Endothelial cell of umbilical vein (primary cell): ENCODE measurements at regions of chr19 and their contacts with region 1.

Region 1: DNA sequence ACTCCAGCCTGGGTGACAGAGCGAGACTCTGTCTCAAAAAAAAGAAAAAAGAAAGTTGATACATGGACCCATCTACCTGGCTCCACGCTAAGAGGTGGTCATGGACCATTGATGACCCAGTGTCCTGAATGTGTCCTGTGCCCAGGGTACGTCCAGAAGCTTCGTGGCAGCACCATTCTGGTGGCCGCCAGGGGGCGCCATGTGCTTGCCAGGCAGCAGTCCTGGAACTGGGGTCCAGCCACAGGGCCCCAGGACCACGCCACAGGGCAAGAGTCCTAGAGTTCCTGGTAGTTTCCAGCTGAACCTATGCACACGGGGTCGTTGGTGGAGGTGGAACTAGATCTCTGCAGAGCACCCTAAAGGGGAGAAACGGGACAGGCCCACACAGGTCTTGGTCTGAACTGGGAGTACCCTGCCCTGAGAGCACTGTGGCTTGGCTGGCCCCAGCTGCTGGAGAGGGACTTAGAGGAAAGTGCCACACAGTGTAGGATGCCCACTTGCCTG is 19.9 kb upstream of the FBXO27 start:
- DNase-seq: peak; percentile 53
- H3K4me3 ChIP-seq: no peak overlapping the region
- H3K27ac ChIP-seq: no peak overlapping the region
- H3K4me1 ChIP-seq: no peaks in the 10 kb centered on the region
- H3K27me3 ChIP-seq: peaks cover 0 to 1% of the 10 kb centered on the region in 2 experiments
- CTCF ChIP-seq: peak; percentile 79 to 89
- POLR2A ChIP-seq: no peak

Region 2: DNA sequence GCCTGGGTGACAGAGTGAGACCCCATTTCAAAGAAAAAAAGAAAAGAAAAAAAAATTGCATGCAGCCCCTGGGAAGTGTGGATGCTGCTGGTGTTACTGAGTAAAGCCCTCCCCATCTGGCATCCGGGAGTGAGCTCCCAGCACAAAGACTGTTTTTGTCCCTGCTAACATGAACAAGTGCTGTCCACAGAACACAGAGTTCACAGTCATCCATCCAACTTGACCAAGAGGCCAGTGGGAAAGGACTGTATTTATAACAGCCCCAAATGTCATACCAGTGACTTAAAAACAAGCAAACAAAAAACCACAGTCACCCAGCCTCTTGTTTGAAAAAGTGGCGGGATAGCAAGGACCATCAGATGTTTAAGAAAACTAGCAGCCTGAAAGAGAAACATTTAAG is 87.6 kb before region 1 on chr19:
- CTCF ChIA-PET with region 1: interaction called, 36 read pairs
- POLR2A ChIA-PET with region 1: no interaction called
- dilution Hi-C with region 1: no loop called
- intact Hi-C with region 1: loop called (anchors 1 kb)
- DNase-seq: no peak
- H3K4me3 ChIP-seq: no peak overlapping the region
- H3K27ac ChIP-seq: no peak overlapping the region
- H3K4me1 ChIP-seq: peaks cover 2% of the 10 kb centered on the region
- H3K27me3 ChIP-seq: no peaks in the 10 kb centered on the region
- CTCF ChIP-seq: no peak
- POLR2A ChIP-seq: no peak

Region 3: GRCh38 chr19:39038098-39038497 is 14.2 kb before region 1 on chr19:
- CTCF ChIA-PET with region 1: interaction called, 27 read pairs
- POLR2A ChIA-PET with region 1: no interaction called
- dilution Hi-C with region 1: no loop called
- intact Hi-C with region 1: no loop called
- DNase-seq: peak; percentile 55
- H3K4me3 ChIP-seq: no peak overlapping the region
- H3K27ac ChIP-seq: no peak overlapping the region
- H3K4me1 ChIP-seq: no peaks in the 10 kb centered on the region
- H3K27me3 ChIP-seq: no peaks in the 10 kb centered on the region
- CTCF ChIP-seq: peak in 1 of 2 donors; percentile 24
- POLR2A ChIP-seq: no peak

Region 4: DNA sequence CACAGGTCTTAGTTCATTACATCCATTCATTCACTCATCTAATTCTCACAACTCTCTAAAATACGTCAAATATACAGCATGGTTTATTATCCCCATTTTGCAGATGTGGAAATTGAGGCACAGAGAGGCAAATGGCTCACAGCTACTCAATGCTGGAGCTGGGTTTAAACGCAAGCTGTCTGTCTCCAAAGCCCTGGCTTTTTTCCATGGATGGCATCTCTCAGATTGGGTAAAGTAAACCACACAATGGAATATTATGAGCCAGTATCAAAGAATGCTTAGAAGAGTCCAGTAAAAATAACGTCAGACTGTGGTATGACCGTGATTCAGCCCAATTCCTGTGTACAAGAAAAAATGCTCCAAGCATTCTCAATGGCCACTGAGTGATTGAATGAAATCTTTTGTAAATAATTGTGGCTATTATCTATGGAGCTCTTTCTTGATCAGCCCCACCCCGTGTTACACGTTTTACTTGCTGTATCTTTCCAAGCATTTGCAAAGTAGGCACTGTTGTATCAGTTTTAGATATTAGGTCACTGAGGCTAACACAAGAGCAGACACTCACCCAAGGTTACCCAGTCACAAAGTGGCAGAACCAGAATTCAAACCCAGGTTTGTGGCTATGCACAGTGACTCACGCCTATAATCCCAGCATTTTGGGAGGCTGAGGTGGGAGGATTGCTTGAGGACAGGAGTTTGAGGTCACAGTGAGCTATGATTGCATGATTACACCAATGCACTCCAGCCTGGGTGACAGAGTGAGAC is 26.3 kb after region 1 on chr19:
- CTCF ChIA-PET with region 1: interaction called, 29 read pairs
- POLR2A ChIA-PET with region 1: no interaction called
- dilution Hi-C with region 1: no loop called
- intact Hi-C with region 1: no loop called
- DNase-seq: peak; percentile 75
- H3K4me3 ChIP-seq: no peak overlapping the region
- H3K27ac ChIP-seq: peak overlapping the region; percentile 88
- H3K4me1 ChIP-seq: peaks cover 23% of the 10 kb centered on the region
- H3K27me3 ChIP-seq: no peaks in the 10 kb centered on the region
- CTCF ChIP-seq: no peak
- POLR2A ChIP-seq: no peak

Region 5: GRCh38 chr19:39119554-39120229 is 67.4 kb after region 1 on chr19:
- CTCF ChIA-PET with region 1: interaction called, 10 read pairs
- POLR2A ChIA-PET with region 1: no interaction called
- dilution Hi-C with region 1: no loop called
- intact Hi-C with region 1: loop called (anchors 1 kb)
- DNase-seq: no peak
- H3K4me3 ChIP-seq: no peak overlapping the region
- H3K27ac ChIP-seq: no peak overlapping the region
- H3K4me1 ChIP-seq: no peaks in the 10 kb centered on the region
- H3K27me3 ChIP-seq: no peaks in the 10 kb centered on the region
- CTCF ChIP-seq: no peak
- POLR2A ChIP-seq: no peak

Region 6: GRCh38 chr19:39187559-39187957 is 135.3 kb after region 1 on chr19:
- CTCF ChIA-PET with region 1: interaction called, 11 read pairs
- POLR2A ChIA-PET with region 1: no interaction called
- dilution Hi-C with region 1: no loop called
- intact Hi-C with region 1: no loop called
- DNase-seq: no peak
- H3K4me3 ChIP-seq: no peak overlapping the region
- H3K27ac ChIP-seq: no peak overlapping the region
- H3K4me1 ChIP-seq: peaks cover 5% of the 10 kb centered on the region
- H3K27me3 ChIP-seq: peaks cover 4 to 7% of the 10 kb centered on the region in 2 experiments
- CTCF ChIP-seq: no peak
- POLR2A ChIP-seq: no peak

Region 7: GRCh38 chr19:39328046-39328705 is 275.9 kb after region 1 on chr19:
- CTCF ChIA-PET with region 1: interaction called, 23 read pairs
- POLR2A ChIA-PET with region 1: no interaction called
- dilution Hi-C with region 1: no loop called
- intact Hi-C with region 1: loop called (anchors 1 kb)
- DNase-seq: peak; percentile 62
- H3K4me3 ChIP-seq: no peak overlapping the region
- H3K27ac ChIP-seq: no peak overlapping the region
- H3K4me1 ChIP-seq: no peaks in the 10 kb centered on the region
- H3K27me3 ChIP-seq: no peaks in the 10 kb centered on the region
- CTCF ChIP-seq: peak; percentile 95 to 97
- POLR2A ChIP-seq: no peak

Region 8: GRCh38 chr19:39381910-39382611 is 329.8 kb after region 1 on chr19:
- CTCF ChIA-PET with region 1: no interaction called
- POLR2A ChIA-PET with region 1: no interaction called
- dilution Hi-C with region 1: no loop called
- intact Hi-C with region 1: no loop called
- DNase-seq: no peak
- H3K4me3 ChIP-seq: no peak overlapping the region
- H3K27ac ChIP-seq: no peak overlapping the region
- H3K4me1 ChIP-seq: no peaks in the 10 kb centered on the region
- H3K27me3 ChIP-seq: no peaks in the 10 kb centered on the region
- CTCF ChIP-seq: no peak
- POLR2A ChIP-seq: no peak